Posterior cingulate gyrus (tissue), 11 donors: ENCODE measurements at regions of chr7 and their contacts with region 1.

Region 1: DNA sequence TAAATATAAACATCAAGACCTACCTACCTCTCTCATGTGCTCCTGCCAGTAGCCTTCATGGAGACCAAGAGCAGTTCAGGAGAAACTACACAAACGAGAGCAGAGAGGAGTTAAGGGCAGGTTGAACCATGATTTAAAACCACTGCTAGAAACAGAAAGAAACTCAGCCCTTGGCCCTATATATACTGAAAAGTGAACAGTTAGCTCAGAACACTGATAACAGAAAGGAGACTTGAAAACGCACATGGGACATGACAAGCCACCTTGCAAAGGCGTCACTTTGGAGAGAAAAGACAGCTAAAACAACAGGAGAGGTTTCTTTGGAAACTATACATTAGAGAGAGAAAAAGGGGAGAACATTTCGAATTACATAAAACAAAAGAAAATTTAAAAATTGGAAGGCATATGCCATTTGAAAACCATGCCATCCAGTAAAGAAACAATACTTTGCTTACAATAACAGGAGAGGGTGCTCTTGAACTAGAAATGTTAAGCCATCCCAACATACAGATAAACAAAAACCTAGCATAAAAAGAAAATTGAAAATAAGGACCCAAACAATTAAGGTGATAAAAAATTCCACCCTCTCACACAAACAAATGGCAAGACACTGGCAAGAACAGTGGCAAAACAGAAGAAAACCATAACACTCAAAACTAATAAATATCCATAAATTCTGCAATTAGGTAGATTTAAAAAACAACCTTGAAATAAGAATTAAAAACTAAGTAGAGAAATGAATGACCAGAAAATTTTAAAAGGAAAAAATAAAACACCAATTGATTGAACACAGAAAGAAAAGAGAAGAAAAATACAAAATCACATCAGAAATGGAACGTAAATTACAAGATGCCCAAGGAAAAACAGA is 232.7 kb downstream of the IMMP2L start:
- DNase-seq: no peak

Region 2: GRCh38 chr7:111089822-111090426 is 239.7 kb before region 1 on chr7:
- intact Hi-C with region 1: no loop called
- DNase-seq: no peak

Region 3: GRCh38 chr7:111274857-111275256 is 54.7 kb before region 1 on chr7:
- intact Hi-C with region 1: no loop called
- DNase-seq: no peak

Region 4: DNA sequence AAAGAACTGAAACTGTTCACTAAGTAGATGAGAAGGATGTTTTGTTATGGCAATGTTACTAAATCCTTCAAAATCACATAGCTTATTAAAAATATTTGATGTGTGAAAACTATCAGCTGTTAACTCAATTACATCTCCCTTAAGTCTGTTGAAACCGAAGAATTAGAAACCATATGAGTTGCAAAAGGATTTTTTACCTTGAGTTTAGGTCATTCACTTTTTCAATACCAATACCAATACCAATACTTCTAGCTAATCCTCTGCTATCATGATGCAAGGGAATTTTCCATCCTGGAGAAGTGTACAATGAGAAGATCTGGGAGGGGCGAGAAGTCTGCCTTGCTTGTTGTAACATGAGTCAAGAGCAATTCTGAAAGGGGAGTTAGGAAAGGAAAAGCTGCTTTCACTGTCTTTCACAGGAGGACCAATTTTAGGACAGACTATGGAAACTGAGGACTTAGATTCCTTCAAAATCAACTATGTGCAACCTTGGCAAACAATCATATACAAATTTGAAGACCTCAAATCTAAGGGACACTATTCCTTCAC is 33.0 kb after region 1 on chr7:
- intact Hi-C with region 1: no loop called
- DNase-seq: no peak

Region 5: GRCh38 chr7:111438369-111439289 is 109.0 kb after region 1 on chr7:
- intact Hi-C with region 1: loop called (anchors 5 kb)
- DNase-seq: no peak